Activated naive CD4-positive, alpha-beta T cell treated with anti-CD3 and anti-CD28 coated beads for 36 hours (primary cell): ENCODE measurements at regions of chr2 and their contacts with region 1.

Region 1: DNA sequence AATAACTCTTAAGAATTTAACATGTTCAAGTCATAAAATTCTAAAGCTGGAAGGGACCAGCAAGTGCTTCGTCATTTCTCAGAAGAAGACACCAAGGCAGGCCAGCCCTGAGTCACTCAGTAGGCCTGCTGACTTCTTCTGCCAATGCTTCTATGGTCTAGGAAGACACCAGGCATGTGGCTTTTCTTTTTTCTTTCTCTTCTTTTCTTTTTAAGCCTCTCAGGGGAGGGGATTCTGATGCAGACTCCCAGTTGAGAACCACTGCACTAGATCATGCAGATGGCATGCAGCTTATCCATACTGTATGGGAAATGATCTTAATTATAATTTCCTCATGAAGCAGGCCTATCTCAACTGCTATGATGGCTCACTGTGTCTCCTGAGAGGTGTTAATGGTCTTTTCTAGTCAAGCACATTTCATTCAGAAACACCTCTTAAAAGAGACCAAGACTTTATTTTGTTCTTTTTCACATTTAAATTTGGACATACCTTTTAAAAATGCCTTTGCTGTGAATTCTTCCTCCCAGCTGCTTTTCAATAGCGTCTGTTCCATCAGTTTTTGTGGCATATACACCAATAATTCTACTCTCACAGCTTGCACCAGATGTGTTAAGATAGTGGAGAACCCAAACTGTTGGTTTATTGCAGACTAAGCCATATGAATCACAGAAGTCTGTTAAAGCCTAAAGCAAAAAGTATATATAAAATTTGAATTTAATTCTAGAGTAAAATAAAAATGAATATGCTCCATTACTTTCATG is 11.3 kb downstream of the KCTD18 start:
- DNase-seq: no peak
- H3K4me3 Mint-ChIP-seq: no peak overlapping the region
- H3K27ac Mint-ChIP-seq: no peak overlapping the region
- H3K4me1 Mint-ChIP-seq: no peaks in the 10 kb centered on the region
- H3K27me3 Mint-ChIP-seq: no peaks in the 10 kb centered on the region

Region 2: GRCh38 chr2:200483729-200484198 is 14.8 kb before region 1 on chr2:
- CTCF ChIA-PET with region 1: interaction called, 18 read pairs
- intact Hi-C with region 1: no loop called
- DNase-seq: peak; percentile 67
- H3K4me3 Mint-ChIP-seq: no peak overlapping the region
- H3K27ac Mint-ChIP-seq: no peak overlapping the region
- H3K4me1 Mint-ChIP-seq: peaks cover 2% of the 10 kb centered on the region
- H3K27me3 Mint-ChIP-seq: no peaks in the 10 kb centered on the region